ENCODE measurements at regions of chr17 and their contacts with region 1.

Region 1: DNA sequence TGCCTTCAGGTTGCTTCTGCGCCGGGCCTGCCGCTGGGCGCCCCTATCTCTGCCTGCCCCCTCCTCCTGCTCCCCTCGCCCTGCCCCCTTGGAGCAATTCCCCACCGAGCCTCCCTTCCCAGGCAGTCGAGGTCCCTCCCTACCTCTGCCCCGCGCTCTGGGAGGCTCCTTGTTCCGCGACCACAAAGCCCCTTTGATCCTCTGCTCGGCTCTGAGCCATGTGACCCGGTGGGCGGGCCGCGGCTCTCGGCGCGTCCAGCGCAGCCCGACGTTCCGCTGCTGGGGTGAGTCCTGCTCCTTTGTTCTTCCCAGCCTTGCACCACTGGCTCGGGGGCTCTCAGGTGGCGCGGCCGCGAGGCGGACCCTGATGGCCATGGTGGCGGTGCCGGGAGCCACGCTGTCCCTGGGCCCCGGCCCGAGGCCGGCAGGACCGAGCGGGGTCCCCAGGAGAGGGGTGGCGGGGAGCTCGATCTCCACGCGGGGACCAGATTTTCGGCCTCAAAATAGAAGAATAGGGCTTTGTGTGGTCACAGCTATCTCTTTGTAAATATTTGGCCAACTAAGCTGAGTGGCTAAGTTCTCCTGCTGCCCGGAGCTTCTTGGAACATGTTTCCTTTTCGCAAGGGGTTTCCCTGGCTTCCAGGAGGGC is 310.6 kb downstream of the SEC14L1 start:
- DNase-seq: peak; percentile 53 to 85 (median 72)
- ATAC-seq: peak; percentile 47
- H3K4me3 ChIP-seq: peak overlapping the region; percentile 94
- H3K4me3 Mint-ChIP-seq: peak overlapping the region; percentile 98
- H3K27ac ChIP-seq: peak overlapping the region; percentile 67 to 90
- H3K27ac Mint-ChIP-seq: peak overlapping the region; percentile 93
- H3K4me1 ChIP-seq: peaks cover 84% of the 10 kb centered on the region
- H3K4me1 Mint-ChIP-seq: peaks cover 65% of the 10 kb centered on the region
- H3K27me3 ChIP-seq: no peaks in the 10 kb centered on the region
- H3K27me3 Mint-ChIP-seq: no peaks in the 10 kb centered on the region
- CTCF ChIP-seq: no peak

Region 2: DNA sequence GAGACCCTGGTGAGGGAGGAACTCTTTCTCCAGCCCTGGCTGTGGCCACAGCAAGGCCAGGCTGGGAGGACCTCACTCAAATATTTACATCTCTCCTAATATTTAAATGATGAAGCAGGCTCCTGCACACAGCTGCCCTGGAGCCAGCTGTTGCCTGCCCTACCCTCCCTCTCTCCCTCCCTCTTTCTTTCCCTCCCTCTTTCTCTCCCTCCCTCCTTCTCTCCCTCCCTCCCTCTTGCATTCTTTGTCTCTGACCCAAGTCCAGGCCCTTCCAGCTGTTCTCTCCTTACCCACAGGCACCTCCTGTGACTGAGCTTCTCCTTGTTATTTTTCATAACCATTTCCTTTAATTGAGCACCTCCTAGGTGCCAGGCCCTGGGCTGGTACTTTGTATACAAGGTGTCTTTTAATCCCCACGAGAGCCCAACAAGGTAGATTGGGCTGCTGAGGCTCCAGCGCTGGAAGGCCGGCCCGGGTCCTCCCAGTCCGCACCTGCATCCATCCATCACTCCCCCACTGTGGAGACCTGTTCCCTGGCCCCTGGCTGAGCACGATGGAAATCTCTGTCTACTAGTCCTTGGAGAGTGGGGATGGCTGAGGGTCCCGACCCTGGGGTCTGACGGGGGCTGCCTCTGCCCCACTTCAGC is 68.3 kb before region 1 on chr17:
- CTCF ChIA-PET with region 1: no interaction called
- POLR2A ChIA-PET with region 1: interaction called, 36 read pairs
- intact Hi-C with region 1: no loop called
- DNase-seq: no peak
- ATAC-seq: peak; percentile 9
- H3K4me3 ChIP-seq: peak overlapping the region; percentile 41
- H3K4me3 Mint-ChIP-seq: peak overlapping the region; percentile 50
- H3K27ac ChIP-seq: peak overlapping the region in 1 of 2 donors; percentile 32
- H3K27ac Mint-ChIP-seq: peak overlapping the region; percentile 93
- H3K4me1 ChIP-seq: peaks cover 100% of the 10 kb centered on the region
- H3K4me1 Mint-ChIP-seq: peaks cover 93% of the 10 kb centered on the region
- H3K27me3 ChIP-seq: no peaks in the 10 kb centered on the region
- H3K27me3 Mint-ChIP-seq: no peaks in the 10 kb centered on the region
- CTCF ChIP-seq: no peak

Region 3: DNA sequence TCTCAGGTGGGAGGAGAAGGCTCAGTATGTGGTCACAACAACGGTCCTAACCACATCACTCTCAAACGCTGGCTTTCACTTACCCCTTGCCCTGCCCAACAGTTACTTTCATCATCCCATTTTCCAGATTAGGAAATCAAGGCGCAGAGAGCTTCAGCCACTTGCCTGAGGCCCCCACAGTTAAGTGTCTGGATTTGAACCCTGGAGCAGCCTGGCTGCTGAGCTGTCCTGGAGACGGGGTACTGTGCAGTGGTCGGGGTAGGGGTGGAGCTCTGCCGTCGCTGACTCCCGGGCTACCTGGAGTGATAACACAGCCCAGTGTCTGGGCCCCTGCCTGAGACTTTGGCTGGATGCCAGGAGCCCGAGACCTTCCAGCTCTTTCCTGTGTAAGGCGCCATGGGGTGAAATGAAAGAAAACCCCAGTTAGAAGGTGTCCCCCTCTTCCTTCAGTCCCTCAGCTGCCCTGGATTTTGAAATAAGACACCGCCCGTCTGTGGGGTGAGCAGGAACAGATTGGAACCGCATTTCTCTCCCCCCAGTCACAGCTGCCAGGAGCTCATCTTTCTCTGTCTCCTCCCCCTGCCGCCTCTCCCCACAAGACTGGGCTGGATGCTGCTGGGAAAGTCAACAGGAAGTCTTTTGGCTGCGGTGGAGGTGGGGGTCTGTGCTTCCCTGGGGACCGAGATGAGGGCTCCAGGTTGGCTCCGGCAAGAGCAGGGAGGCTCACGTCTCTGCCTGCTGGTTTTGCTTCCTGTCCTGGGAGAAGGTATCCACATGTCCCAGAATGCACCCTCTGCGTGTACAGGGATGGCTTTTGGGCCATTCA is 30.4 kb before region 1 on chr17:
- CTCF ChIA-PET with region 1: no interaction called
- POLR2A ChIA-PET with region 1: interaction called, 22 read pairs
- intact Hi-C with region 1: no loop called
- DNase-seq: peak; percentile 44 to 82 (median 66)
- ATAC-seq: peak; percentile 69
- H3K4me3 ChIP-seq: peak overlapping the region; percentile 31
- H3K4me3 Mint-ChIP-seq: peak overlapping the region; percentile 83
- H3K27ac ChIP-seq: peak overlapping the region; percentile 61 to 76
- H3K27ac Mint-ChIP-seq: peak overlapping the region; percentile 89
- H3K4me1 ChIP-seq: peaks cover 92% of the 10 kb centered on the region
- H3K4me1 Mint-ChIP-seq: peaks cover 65% of the 10 kb centered on the region
- H3K27me3 ChIP-seq: no peaks in the 10 kb centered on the region
- H3K27me3 Mint-ChIP-seq: no peaks in the 10 kb centered on the region
- CTCF ChIP-seq: no peak

Region 4: DNA sequence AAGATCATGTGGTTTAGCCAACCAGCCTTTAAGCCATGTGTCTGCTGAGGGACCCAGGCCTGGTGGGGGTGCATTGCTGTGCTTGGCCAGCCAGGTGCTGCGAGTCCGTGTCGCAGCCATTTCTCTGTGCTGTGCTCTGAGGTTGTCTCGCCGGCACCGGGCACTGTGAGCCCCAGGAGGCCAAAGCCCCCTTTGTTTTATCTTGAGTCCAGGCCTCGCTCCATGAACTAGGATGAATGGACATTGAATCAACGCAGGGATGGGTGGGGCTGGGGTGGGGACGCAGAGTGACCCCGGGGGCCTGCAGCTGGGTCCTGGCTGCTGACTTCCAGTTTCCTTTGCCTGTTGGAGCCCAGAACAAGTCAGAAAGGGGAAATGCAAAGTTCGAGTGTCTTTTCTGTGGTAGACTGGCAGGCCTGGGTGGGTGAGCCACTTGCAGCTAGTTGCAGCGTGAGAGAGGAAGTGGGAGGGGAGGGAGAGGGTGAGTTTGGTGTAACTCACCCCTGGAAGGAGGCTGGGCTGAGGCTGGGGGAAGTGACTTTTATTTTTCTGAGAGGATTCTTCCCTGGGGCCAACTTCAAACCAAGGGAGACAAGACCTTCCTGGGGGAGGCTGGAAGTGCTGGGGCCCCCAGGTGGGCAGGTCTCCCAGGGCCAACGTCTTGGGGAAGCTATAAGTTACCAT is 14.1 kb after region 1 on chr17:
- CTCF ChIA-PET with region 1: interaction called, 3 read pairs
- POLR2A ChIA-PET with region 1: interaction called, 681 read pairs
- intact Hi-C with region 1: loop called in 1 of 2 experiments (anchors 1 kb)
- DNase-seq: peak; percentile 63 to 91 (median 78)
- ATAC-seq: peak; percentile 93
- H3K4me3 ChIP-seq: peak overlapping the region; percentile 39
- H3K4me3 Mint-ChIP-seq: peak overlapping the region; percentile 85
- H3K27ac ChIP-seq: peak overlapping the region; percentile 58 to 74
- H3K27ac Mint-ChIP-seq: peak overlapping the region; percentile 96
- H3K4me1 ChIP-seq: peaks cover 100% of the 10 kb centered on the region
- H3K4me1 Mint-ChIP-seq: peaks cover 84% of the 10 kb centered on the region
- H3K27me3 ChIP-seq: no peaks in the 10 kb centered on the region
- H3K27me3 Mint-ChIP-seq: no peaks in the 10 kb centered on the region
- CTCF ChIP-seq: no peak

Region 5: DNA sequence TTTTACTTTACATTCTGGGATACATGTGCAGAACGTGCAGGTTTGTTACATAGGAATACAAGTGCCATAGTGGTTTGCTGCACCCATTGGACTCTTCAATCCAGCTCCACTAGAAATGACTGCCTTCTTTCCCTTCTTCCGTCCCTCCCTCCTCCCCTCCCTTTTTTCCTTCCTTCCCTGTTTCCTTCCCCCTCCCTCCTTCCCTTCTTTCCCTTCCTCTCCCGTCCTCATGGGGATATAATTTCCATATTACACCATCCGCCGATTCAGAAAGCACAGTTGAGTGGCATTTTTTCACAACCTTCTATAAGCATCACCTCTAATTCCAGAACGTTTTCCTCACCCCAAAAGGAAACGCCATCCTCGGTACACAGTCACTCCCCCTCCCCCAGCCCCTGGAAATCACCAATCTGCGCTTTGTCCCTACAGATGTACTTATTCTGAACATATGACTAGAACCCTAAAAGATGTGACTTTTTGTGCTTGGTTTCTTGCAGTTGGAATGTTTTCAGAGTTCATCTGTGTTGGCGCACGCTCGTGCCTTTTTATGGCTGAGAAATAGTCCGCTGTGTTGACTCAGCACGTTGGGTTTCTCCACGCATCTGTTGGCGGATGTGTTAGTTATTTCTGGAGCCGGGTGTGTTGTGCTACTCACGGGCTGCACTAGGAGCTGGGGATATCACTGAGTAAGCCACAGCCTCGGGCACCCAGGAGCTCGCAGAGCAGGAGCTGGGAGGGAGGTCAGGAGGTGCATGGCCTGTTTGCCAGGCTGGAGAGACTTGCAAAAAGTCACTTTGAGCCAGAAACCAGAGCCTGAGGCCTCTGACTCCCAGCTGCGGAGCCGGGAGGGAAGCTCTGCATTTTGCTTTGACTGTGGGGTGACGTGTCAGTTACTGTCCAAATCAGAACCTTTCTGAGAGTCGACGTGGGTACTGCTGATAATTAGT is 25.8 kb after region 1 on chr17:
- CTCF ChIA-PET with region 1: interaction called, 3 read pairs
- POLR2A ChIA-PET with region 1: interaction called, 90 read pairs
- intact Hi-C with region 1: loop called in 1 of 2 experiments (anchors 2 kb)
- DNase-seq: peak in 2 of 14 experiments; percentile 47 to 48
- ATAC-seq: peak; percentile 33
- H3K4me3 ChIP-seq: no peak overlapping the region
- H3K4me3 Mint-ChIP-seq: peak overlapping the region; percentile 74
- H3K27ac ChIP-seq: peak overlapping the region; percentile 58 to 75
- H3K27ac Mint-ChIP-seq: peak overlapping the region; percentile 97
- H3K4me1 ChIP-seq: peaks cover 98% of the 10 kb centered on the region
- H3K4me1 Mint-ChIP-seq: peaks cover 79% of the 10 kb centered on the region
- H3K27me3 ChIP-seq: no peaks in the 10 kb centered on the region
- H3K27me3 Mint-ChIP-seq: no peaks in the 10 kb centered on the region
- CTCF ChIP-seq: no peak

Region 6: GRCh38 chr17:77501101-77501566 is 49.8 kb after region 1 on chr17:
- CTCF ChIA-PET with region 1: no interaction called
- POLR2A ChIA-PET with region 1: no interaction called
- intact Hi-C with region 1: no loop called
- DNase-seq: peak in 8 of 14 experiments; percentile 20 to 63 (median 30)
- ATAC-seq: peak; percentile 43
- H3K4me3 ChIP-seq: no peak overlapping the region
- H3K4me3 Mint-ChIP-seq: no peak overlapping the region
- H3K27ac ChIP-seq: no peak overlapping the region
- H3K27ac Mint-ChIP-seq: peak overlapping the region; percentile 24
- H3K4me1 ChIP-seq: peaks cover 2% of the 10 kb centered on the region
- H3K4me1 Mint-ChIP-seq: peaks cover 4% of the 10 kb centered on the region
- H3K27me3 ChIP-seq: no peaks in the 10 kb centered on the region
- H3K27me3 Mint-ChIP-seq: no peaks in the 10 kb centered on the region
- CTCF ChIP-seq: peak; percentile 45

Measured in CD4-positive, alpha-beta T cell (primary cell).